Naive thymus-derived CD4-positive, alpha-beta T cell (primary cell): ENCODE measurements at regions of chr11 and their contacts with region 1.

Region 1: DNA sequence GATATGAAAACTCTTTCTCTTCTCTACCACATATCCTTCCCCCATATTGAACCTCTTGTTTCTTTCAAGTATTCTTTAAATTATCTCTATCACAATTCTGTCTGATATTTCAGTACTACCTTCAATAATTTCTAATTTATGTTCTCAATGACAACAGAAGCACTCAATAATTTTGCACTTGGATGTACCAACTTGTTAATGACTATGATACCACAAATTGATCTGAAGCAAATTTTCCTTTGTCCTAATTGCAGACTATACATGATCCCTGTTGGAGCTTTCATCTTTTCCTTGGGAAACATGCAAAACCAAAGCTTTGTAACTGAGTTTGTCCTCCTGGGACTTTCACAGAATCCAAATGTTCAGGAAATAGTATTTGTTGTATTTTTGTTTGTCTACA is at the start of gene OR4C15:
- DNase-seq: no peak
- ATAC-seq: no peak
- H3K4me3 ChIP-seq: no peak within 1 kb of the TSS
- H3K4me3 Mint-ChIP-seq: no peak within 1 kb of the TSS
- H3K27ac ChIP-seq: no peak within 1 kb of the TSS
- H3K27ac Mint-ChIP-seq: no peak within 1 kb of the TSS
- H3K4me1 ChIP-seq: no peaks in the 10 kb centered on the region
- H3K4me1 Mint-ChIP-seq: no peaks in the 10 kb centered on the region
- H3K27me3 ChIP-seq: no peaks in the 10 kb centered on the region
- H3K27me3 Mint-ChIP-seq: no peaks in the 10 kb centered on the region
- total RNA-seq, gene OR4C15: not detected

Region 2: GRCh38 chr11:55497068-55497467 is 57.1 kb before region 1 on chr11:
- CTCF ChIA-PET with region 1: no interaction called
- POLR2A ChIA-PET with region 1: no interaction called
- intact Hi-C with region 1: loop called in 1 of 2 experiments (anchors 10 kb)
- DNase-seq: no peak
- ATAC-seq: no peak
- H3K4me3 ChIP-seq: no peak overlapping the region
- H3K4me3 Mint-ChIP-seq: no peak overlapping the region
- H3K27ac ChIP-seq: no peak overlapping the region
- H3K27ac Mint-ChIP-seq: no peak overlapping the region
- H3K4me1 ChIP-seq: no peaks in the 10 kb centered on the region
- H3K4me1 Mint-ChIP-seq: no peaks in the 10 kb centered on the region
- H3K27me3 ChIP-seq: no peaks in the 10 kb centered on the region
- H3K27me3 Mint-ChIP-seq: no peaks in the 10 kb centered on the region